ENCODE measurements at regions of chr9 and their contacts with region 1.

Region 1: DNA sequence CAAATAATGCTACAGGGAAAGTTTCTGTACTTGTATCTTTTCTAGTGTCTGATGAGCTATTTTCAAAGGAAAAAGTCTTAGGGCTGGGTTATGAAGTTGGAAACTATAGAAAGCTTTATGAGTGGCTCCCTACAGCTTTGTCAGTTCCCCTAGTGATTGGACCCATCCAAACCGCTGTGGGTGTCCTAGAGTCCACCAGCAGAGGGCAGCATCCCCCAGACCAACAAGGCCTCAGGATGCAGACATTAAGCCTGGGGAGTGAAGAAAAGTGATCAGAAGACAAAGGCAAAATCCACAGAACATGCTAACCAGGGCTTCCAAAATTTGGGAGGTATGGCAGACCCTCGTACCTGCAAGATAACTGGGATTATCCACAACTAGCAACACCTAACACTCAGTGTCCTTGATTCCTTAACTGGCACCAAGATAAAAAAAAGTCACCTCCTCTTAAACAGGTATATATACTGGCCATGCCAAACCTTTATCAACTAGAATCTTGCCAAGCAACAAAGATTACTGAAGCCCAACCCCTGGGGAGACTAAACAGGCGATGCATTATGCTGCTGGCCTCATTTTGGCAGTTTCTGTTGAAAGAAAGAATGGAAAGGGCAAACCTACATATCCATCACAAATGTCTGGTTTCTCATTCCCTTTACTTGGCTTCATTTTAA is 110.4 kb upstream of the NR5A1 start:
- DNase-seq: peak; percentile 55 to 83 (median 73)
- H3K4me3 ChIP-seq: no peak overlapping the region
- H3K27ac ChIP-seq: no peak overlapping the region
- H3K4me1 ChIP-seq: no peaks in the 10 kb centered on the region
- H3K27me3 ChIP-seq: no peaks in the 10 kb centered on the region
- CTCF ChIP-seq: peak; percentile 59 to 66 (median 59)
- EP300 ChIP-seq: no peak
- POLR2A ChIP-seq: no peak

Region 2: GRCh38 chr9:124708633-124709291 is 91.2 kb after region 1 on chr9:
- intact Hi-C with region 1: loop called (anchors 2 to 10 kb)
- DNase-seq: no peak
- H3K4me3 ChIP-seq: no peak overlapping the region
- H3K27ac ChIP-seq: no peak overlapping the region
- H3K4me1 ChIP-seq: no peaks in the 10 kb centered on the region
- H3K27me3 ChIP-seq: no peaks in the 10 kb centered on the region
- CTCF ChIP-seq: no peak
- EP300 ChIP-seq: no peak
- POLR2A ChIP-seq: no peak

Region 3: DNA sequence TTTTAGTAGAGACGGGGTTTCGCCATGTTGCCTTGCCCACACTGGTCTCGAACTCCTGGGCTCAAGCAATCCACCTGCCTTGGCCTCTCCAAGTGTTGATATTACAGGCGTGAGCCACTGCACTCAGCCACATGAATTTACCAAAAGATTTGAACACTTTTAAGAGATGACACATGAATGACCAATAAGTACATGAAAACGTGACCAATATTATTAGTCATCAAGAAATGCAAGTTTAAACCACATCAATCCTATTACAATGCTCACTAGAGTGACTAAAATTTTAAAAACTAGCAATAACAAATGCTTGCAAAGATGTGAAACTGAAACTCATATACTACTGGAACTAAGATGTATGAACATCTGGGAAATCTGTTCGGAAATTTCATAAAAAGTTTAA is 99.2 kb after region 1 on chr9:
- intact Hi-C with region 1: loop called in 3 of 4 experiments (anchors 5 to 10 kb)
- DNase-seq: no peak
- H3K4me3 ChIP-seq: no peak overlapping the region
- H3K27ac ChIP-seq: no peak overlapping the region
- H3K4me1 ChIP-seq: peaks cover 4% of the 10 kb centered on the region
- H3K27me3 ChIP-seq: no peaks in the 10 kb centered on the region
- CTCF ChIP-seq: no peak
- EP300 ChIP-seq: no peak
- POLR2A ChIP-seq: no peak

Region 4: GRCh38 chr9:124852829-124853531 is 235.4 kb after region 1 on chr9 and contains the start of gene WDR38:
- intact Hi-C with region 1: loop called in 1 of 4 experiments (anchors 10 kb)
- DNase-seq: peak; percentile 60 to 85 (median 75)
- H3K4me3 ChIP-seq: peak within 1 kb of the TSS; percentile 31
- H3K27ac ChIP-seq: peak within 1 kb of the TSS; percentile 8 to 36
- H3K4me1 ChIP-seq: peaks cover 4% of the 10 kb centered on the region
- H3K27me3 ChIP-seq: no peaks in the 10 kb centered on the region
- CTCF ChIP-seq: peak; percentile 99 to 100 (median 99)
- EP300 ChIP-seq: no peak
- POLR2A ChIP-seq: peak; percentile 25
- total RNA-seq, gene WDR38: 0.94 to 22.5 (median 1.4) TPM in 4 of 7 donors, not detected in the others

Measured in ovary (tissue), 10 donors.